CD4-positive, alpha-beta T cell (primary cell): ENCODE measurements at regions of chr10 and their contacts with region 1.

Region 1: DNA sequence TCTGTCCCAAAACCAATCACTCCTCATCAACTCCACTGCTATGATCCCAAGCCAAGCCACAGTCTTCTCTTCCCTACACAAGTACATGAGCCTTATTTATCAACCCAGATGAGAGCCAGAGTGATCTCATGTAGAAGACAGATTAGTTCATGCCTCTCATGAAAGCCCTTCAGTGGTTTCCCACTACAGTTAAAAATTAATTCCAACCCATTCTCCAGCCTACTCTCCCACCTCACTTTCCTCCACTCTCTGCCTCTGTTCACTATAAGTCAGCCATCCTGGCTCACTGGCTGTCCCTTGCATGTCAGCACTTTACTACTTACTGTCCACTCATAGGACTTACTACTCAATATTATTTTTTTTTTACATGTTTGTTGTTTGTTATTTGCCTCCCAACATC is 67.3 kb downstream of the CACUL1 start:
- DNase-seq: no peak
- ATAC-seq: no peak
- H3K4me3 ChIP-seq: no peak overlapping the region
- H3K4me3 Mint-ChIP-seq: no peak overlapping the region
- H3K27ac ChIP-seq: no peak overlapping the region
- H3K27ac Mint-ChIP-seq: no peak overlapping the region
- H3K4me1 ChIP-seq: no peaks in the 10 kb centered on the region
- H3K4me1 Mint-ChIP-seq: peaks cover 19% of the 10 kb centered on the region
- H3K27me3 ChIP-seq: no peaks in the 10 kb centered on the region
- H3K27me3 Mint-ChIP-seq: no peaks in the 10 kb centered on the region
- CTCF ChIP-seq: no peak

Region 2: GRCh38 chr10:118405928-118406327 is 281.5 kb before region 1 on chr10:
- CTCF ChIA-PET with region 1: no interaction called
- POLR2A ChIA-PET with region 1: no interaction called
- intact Hi-C with region 1: no loop called
- DNase-seq: no peak
- ATAC-seq: no peak
- H3K4me3 ChIP-seq: no peak overlapping the region
- H3K4me3 Mint-ChIP-seq: no peak overlapping the region
- H3K27ac ChIP-seq: no peak overlapping the region
- H3K27ac Mint-ChIP-seq: no peak overlapping the region
- H3K4me1 ChIP-seq: no peaks in the 10 kb centered on the region
- H3K4me1 Mint-ChIP-seq: no peaks in the 10 kb centered on the region
- H3K27me3 ChIP-seq: peaks cover 2 to 13% of the 10 kb centered on the region in 2 experiments
- H3K27me3 Mint-ChIP-seq: peaks cover 41% of the 10 kb centered on the region
- CTCF ChIP-seq: no peak

Region 3: DNA sequence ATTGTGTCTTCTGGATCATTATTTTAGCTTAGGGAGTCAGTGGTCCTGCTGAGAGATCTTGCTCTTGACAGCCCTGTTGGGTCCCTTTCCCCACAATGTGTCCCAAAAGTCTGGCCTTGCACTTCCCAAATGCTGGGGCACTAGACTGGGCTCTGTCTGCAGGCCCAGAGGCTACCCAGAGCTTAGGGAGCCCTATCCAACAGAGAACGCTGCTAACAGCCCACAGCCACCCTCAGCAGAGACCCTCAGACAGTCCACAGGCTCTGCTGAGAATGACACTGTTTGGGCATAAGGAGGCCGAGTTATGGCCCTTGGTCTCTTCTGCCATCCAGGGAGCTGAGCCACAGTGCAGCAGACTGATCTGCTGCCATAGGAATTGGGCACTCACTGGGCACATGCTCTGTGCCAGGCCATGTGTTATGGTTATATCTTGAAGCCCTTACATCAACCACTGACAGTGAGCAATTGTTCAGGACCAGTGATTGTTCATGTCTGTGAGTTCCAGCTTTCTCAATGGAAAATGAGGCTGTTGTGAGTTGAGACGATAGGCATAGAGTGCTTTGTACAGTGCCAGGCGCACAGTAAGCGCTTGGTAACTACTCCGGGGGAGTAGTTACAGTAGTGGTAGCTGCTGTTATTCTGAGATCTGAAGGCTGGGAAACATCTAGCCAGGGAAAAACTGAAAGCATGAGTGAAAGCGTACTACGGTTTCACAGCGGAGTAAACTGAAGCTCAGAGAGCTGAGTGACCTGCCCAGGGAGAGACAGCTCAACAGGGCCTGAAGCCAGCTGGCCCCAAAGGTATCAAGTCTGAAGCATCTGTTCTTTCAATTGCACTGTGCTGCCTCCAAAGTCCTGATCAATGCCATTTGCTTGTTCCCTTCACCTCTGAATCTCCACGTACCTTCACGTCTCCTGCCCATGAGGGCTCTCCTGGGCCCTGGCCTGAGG is 14.4 kb before region 1 on chr10:
- CTCF ChIA-PET with region 1: interaction called, 3 read pairs
- POLR2A ChIA-PET with region 1: interaction called, 3 read pairs
- intact Hi-C with region 1: loop called in 1 of 2 experiments (anchors 2 kb)
- DNase-seq: no peak
- ATAC-seq: no peak
- H3K4me3 ChIP-seq: no peak overlapping the region
- H3K4me3 Mint-ChIP-seq: no peak overlapping the region
- H3K27ac ChIP-seq: no peak overlapping the region
- H3K27ac Mint-ChIP-seq: peak overlapping the region; percentile 74
- H3K4me1 ChIP-seq: peaks cover 28% of the 10 kb centered on the region
- H3K4me1 Mint-ChIP-seq: peaks cover 69% of the 10 kb centered on the region
- H3K27me3 ChIP-seq: no peaks in the 10 kb centered on the region
- H3K27me3 Mint-ChIP-seq: no peaks in the 10 kb centered on the region
- CTCF ChIP-seq: no peak

Region 4: GRCh38 chr10:118698421-118698820 is 10.9 kb after region 1 on chr10:
- CTCF ChIA-PET with region 1: no interaction called
- POLR2A ChIA-PET with region 1: interaction called, 5 read pairs
- intact Hi-C with region 1: loop called in 1 of 2 experiments (anchors 1 kb)
- DNase-seq: peak; percentile 64 to 91 (median 80)
- ATAC-seq: peak; percentile 100
- H3K4me3 ChIP-seq: peak overlapping the region; percentile 22
- H3K4me3 Mint-ChIP-seq: peak overlapping the region; percentile 71
- H3K27ac ChIP-seq: peak overlapping the region; percentile 46 to 50
- H3K27ac Mint-ChIP-seq: peak overlapping the region; percentile 80
- H3K4me1 ChIP-seq: peaks cover 17% of the 10 kb centered on the region
- H3K4me1 Mint-ChIP-seq: peaks cover 84% of the 10 kb centered on the region
- H3K27me3 ChIP-seq: no peaks in the 10 kb centered on the region
- H3K27me3 Mint-ChIP-seq: no peaks in the 10 kb centered on the region
- CTCF ChIP-seq: no peak

Region 5: DNA sequence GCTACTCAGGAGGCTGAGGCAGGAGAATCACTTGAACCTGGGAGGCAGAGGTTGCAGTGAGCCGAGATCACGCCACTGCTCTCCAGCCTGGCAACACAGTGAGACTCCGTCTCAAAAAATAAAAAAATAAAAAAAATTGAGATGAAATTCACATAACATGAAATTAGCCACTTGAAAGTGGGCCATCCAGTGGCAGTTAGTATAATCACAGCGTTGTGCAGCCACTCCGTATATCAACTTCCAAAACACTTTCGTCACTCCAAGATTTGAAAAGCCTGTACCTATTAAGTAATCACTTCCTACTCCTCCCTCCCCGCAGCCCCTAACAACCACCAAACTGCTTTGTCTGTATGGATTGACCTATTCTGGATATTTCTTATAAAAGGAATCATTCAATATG is 88.0 kb after region 1 on chr10:
- CTCF ChIA-PET with region 1: no interaction called
- POLR2A ChIA-PET with region 1: no interaction called
- intact Hi-C with region 1: no loop called
- DNase-seq: no peak
- ATAC-seq: no peak
- H3K4me3 ChIP-seq: no peak overlapping the region
- H3K4me3 Mint-ChIP-seq: no peak overlapping the region
- H3K27ac ChIP-seq: no peak overlapping the region
- H3K27ac Mint-ChIP-seq: no peak overlapping the region
- H3K4me1 ChIP-seq: no peaks in the 10 kb centered on the region
- H3K4me1 Mint-ChIP-seq: no peaks in the 10 kb centered on the region
- H3K27me3 ChIP-seq: no peaks in the 10 kb centered on the region
- H3K27me3 Mint-ChIP-seq: peaks cover 3% of the 10 kb centered on the region
- CTCF ChIP-seq: no peak